ENCODE measurements at regions of chr1 and their contacts with region 1.

Region 1: GRCh38 chr1:236281654-236282424 is at the start of gene ERO1B:
- DNase-seq: peak; percentile 92 to 95
- ATAC-seq: peak; percentile 95
- H3K4me3 ChIP-seq: peak within 1 kb of the TSS; percentile 82 to 96 (median 94)
- H3K27ac ChIP-seq: peak within 1 kb of the TSS; percentile 83 to 93 (median 87)
- H3K4me1 ChIP-seq: peaks cover 9% of the 10 kb centered on the region in 2 donors
- H3K27me3 ChIP-seq: peaks cover 0 to 5% (median 2%) of the 10 kb centered on the region in 3 donors
- CTCF ChIP-seq: no peak
- POLR2A ChIP-seq: peak; percentile 95 to 99
- total RNA-seq, gene ERO1B: 3.6 to 10.2 (median 5.8) TPM

Region 2: DNA sequence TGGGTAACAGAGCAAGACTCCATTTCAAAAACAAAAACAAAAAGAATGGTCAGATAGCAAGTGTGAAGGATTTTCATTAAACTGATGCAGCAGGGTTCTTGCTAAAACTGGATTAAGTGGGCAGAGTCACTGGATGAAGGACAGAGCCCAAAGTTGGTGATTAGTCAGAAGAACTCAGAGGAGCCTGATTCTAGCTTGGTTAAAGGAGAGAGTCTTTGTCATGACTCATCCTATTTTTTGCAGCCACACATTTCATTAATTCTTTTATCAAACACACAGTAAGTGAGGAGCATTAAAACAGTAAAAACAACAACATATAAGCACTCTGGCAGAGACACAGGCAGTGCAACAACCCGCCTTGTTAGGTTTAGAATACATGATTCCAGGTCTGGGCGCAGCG is 56.3 kb after region 1 on chr1:
- in situ Hi-C with region 1: no loop called
- intact Hi-C with region 1: no loop called
- DNase-seq: no peak
- ATAC-seq: no peak
- H3K4me3 ChIP-seq: no peak overlapping the region
- H3K27ac ChIP-seq: no peak overlapping the region
- H3K4me1 ChIP-seq: no peaks in the 10 kb centered on the region
- H3K27me3 ChIP-seq: no peaks in the 10 kb centered on the region
- CTCF ChIP-seq: no peak
- POLR2A ChIP-seq: no peak

Region 3: DNA sequence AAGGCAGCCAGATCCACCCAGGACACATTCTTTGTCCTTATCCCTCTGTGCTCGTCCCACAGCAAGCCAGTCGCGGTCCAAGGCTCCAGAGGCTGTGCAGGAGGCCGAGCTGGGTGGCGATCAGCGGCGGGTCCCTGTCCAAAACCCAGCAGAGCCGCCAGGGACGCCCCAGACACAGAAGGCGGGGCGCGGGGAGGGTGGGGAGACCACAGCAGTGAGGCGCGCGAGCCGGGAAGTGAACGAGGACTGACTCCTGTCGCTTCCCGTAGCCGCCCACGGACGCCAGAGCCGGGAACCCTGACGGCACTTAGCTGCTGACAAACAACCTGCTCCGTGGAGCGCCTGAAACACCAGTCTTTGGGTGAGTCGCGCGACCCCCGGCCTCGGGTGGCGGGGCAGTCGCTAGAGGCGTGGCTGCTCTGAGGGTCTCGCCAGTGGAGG is 241.9 kb after region 1 on chr1 and contains the start of gene LGALS8:
- in situ Hi-C with region 1: no loop called
- intact Hi-C with region 1: loop called (anchors 5 kb)
- DNase-seq: peak; percentile 63 to 67
- ATAC-seq: peak; percentile 76 to 80
- H3K4me3 ChIP-seq: peak within 1 kb of the TSS; percentile 84 to 98 (median 96)
- H3K27ac ChIP-seq: peak within 1 kb of the TSS; percentile 77 to 81 (median 80)
- H3K4me1 ChIP-seq: peaks cover 5 to 9% of the 10 kb centered on the region in 2 donors
- H3K27me3 ChIP-seq: no peaks in the 10 kb centered on the region
- CTCF ChIP-seq: no peak
- POLR2A ChIP-seq: peak; percentile 30
- total RNA-seq, gene LGALS8: 11.1 to 20.7 (median 12.5) TPM

Region 4: GRCh38 chr1:236795035-236795756 is 513.4 kb after region 1 on chr1 and contains the start of gene MTR:
- in situ Hi-C with region 1: loop called in 2 of 4 experiments (anchors 10 to 25 kb)
- intact Hi-C with region 1: loop called (anchors 10 kb)
- DNase-seq: peak; percentile 99
- ATAC-seq: peak; percentile 96
- H3K4me3 ChIP-seq: peak within 1 kb of the TSS; percentile 79 to 86 (median 84)
- H3K27ac ChIP-seq: peak within 1 kb of the TSS; percentile 92 to 94 (median 93)
- H3K4me1 ChIP-seq: peaks cover 39 to 42% of the 10 kb centered on the region in 2 donors
- H3K27me3 ChIP-seq: no peaks in the 10 kb centered on the region
- CTCF ChIP-seq: no peak
- POLR2A ChIP-seq: peak; percentile 89 to 93
- total RNA-seq, gene MTR: 23.0 to 46.3 (median 29.1) TPM